Activated CD4-positive, alpha-beta T cell treated with anti-CD3 and anti-CD28 coated beads for 36 hours (primary cell): ENCODE measurements at regions of chr20 and their contacts with region 1.

Region 1: DNA sequence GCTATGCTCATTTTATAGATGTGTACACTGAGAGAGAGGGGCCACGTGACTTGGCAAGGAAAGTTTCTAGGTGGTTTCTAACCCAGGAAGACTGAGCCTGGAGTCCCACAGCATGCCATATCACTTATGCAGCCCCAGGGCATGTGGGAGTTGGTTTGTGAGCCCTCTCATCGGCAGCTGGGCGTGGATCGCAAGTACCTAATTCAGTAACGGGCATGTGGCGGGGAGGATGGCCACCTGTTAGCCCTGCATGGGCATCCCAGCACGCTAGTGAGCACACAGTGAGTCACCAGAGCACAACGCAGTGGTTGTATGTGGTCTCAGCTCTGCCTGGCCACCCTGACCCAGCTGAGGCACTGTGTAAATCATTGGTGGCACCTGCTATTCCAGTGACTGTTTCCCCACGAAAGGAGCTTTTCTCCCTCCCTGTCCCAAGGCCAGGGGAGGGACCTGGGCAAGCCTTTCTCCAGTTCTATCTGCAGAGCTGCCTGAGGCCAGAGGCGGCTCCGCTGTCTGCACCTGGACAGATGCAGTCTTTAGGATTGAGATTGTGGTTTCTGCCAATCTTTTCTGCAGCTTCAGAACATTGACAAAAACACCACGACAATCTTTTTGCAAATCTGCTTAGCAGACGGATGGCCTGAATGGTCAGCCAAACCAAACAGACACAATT is 88.2 kb downstream of the NINL start:
- DNase-seq: no peak
- ATAC-seq: no peak
- H3K4me3 Mint-ChIP-seq: no peak overlapping the region
- H3K27ac Mint-ChIP-seq: no peak overlapping the region
- H3K4me1 Mint-ChIP-seq: no peaks in the 10 kb centered on the region
- H3K27me3 Mint-ChIP-seq: no peaks in the 10 kb centered on the region

Region 2: GRCh38 chr20:25437153-25437581 is 59.9 kb before region 1 on chr20:
- CTCF ChIA-PET with region 1: no interaction called
- POLR2A ChIA-PET with region 1: no interaction called
- intact Hi-C with region 1: loop called in 1 of 2 experiments (anchors 10 kb)
- DNase-seq: no peak
- ATAC-seq: no peak
- H3K4me3 Mint-ChIP-seq: no peak overlapping the region
- H3K27ac Mint-ChIP-seq: no peak overlapping the region
- H3K4me1 Mint-ChIP-seq: no peaks in the 10 kb centered on the region
- H3K27me3 Mint-ChIP-seq: no peaks in the 10 kb centered on the region